ENCODE measurements at regions of chr6 and their contacts with region 1.

Region 1: DNA sequence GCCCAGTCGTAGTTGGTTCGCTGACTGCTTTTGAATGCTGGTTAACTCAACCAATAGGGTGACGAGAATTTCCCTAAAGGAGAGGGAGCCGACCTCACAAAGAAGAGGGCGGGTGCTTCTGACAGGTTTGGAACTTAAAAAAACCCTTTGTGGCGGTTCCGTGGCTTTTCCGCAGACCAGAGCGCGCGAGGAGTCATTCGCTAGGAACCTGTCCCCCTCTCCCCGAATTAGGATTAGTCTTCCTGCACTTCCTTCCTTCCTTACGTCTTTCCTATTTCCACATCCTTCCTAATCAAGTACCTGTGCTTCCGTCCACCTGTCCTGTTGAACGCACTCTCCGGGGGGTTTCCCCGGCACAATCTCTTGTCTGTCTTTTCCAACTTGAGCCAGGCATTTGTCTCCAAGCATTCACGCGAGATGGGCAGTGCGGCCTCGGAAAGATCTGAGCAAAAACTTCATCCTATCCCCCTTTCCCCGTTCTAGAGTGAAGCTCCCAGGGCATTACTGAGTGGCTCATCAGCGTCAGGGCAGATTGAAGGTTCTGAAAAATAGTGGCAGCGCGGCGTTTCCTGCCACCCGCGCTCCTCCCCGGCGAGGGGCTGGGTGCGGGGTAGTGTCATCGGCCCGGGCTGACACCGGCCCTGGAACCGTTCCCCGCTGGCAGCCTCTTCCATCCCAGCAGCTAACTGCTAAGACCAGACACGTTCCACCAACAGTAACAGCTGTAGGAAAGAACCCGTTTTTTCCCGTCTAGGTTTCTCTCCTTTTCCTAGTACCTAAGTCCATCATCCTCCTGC is 1.5 kb upstream of the STXBP5 start:
- DNase-seq: peak; percentile 98
- ATAC-seq: peak; percentile 76
- H3K4me3 ChIP-seq: peak overlapping the region; percentile 60
- H3K27ac ChIP-seq: peak overlapping the region; percentile 68
- H3K4me1 ChIP-seq: no peaks in the 10 kb centered on the region
- H3K27me3 ChIP-seq: no peaks in the 10 kb centered on the region
- CTCF ChIP-seq: no peak
- POLR2A ChIP-seq: no peak; the same call in 1 of the 2 replicates
- RAD21 ChIP-seq: no peak

Region 2: GRCh38 chr6:146028293-146028691 is 1174.4 kb before region 1 on chr6:
- CTCF ChIA-PET with region 1: no interaction called
- POLR2A ChIA-PET with region 1: no interaction called
- dilution Hi-C with region 1: no loop called
- in situ Hi-C with region 1: no loop called
- intact Hi-C with region 1: no loop called
- DNase-seq: peak; percentile 42
- ATAC-seq: peak; percentile 99
- H3K4me3 ChIP-seq: no peak overlapping the region
- H3K27ac ChIP-seq: no peak overlapping the region
- H3K4me1 ChIP-seq: no peaks in the 10 kb centered on the region
- H3K27me3 ChIP-seq: no peaks in the 10 kb centered on the region; the same call in 1 of the 2 replicates
- CTCF ChIP-seq: no peak
- POLR2A ChIP-seq: no peak
- RAD21 ChIP-seq: no peak

Region 3: GRCh38 chr6:146682919-146683318 is 519.8 kb before region 1 on chr6:
- CTCF ChIA-PET with region 1: no interaction called
- POLR2A ChIA-PET with region 1: no interaction called
- dilution Hi-C with region 1: no loop called
- in situ Hi-C with region 1: no loop called
- intact Hi-C with region 1: no loop called
- DNase-seq: no peak
- ATAC-seq: no peak
- H3K4me3 ChIP-seq: no peak overlapping the region
- H3K27ac ChIP-seq: no peak overlapping the region
- H3K4me1 ChIP-seq: no peaks in the 10 kb centered on the region
- H3K27me3 ChIP-seq: no peaks in the 10 kb centered on the region
- CTCF ChIP-seq: no peak
- POLR2A ChIP-seq: no peak
- RAD21 ChIP-seq: no peak

Region 4: DNA sequence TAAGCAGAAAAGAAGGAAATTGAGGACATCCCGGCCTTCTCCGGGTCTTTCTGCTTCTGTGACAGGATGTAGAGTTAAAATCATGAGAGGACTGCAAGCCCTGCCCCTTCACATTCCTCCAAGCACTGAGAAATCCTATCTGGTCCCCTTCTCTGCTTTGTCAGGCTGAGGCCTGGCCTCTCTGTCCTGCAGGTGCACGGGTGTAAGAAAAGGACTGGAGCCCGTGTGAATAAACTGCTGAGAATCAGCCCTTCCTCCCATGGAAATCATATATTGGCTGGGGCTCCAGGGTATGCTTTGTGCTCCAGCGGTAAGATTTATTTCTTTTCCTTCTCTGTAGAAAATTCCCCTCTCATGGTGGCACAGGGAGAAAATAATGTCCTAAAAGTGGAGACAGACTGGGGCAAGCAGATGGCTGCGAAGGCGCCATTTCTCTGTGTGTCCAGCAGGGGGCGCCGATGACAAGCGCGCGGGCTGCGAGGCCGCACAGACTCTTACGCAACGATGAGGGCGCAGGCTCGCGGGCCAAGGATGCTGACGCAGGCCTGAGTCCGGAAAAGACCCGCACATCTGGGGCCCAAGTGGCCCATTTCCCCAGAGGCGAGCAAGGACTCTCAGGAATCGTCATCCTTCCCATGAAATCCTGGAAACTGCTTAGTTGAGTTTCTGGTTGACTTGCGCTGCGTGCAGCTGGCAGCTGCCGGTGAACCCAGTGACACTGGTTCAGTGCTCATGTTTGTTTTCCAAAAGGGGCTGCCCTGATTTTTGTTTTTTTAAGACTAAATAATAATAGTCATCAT is 345.3 kb before region 1 on chr6:
- CTCF ChIA-PET with region 1: no interaction called
- POLR2A ChIA-PET with region 1: interaction called, 3 read pairs
- dilution Hi-C with region 1: no loop called
- in situ Hi-C with region 1: no loop called
- intact Hi-C with region 1: loop called (anchors 1 kb)
- DNase-seq: peak; percentile 93
- ATAC-seq: peak; percentile 96
- H3K4me3 ChIP-seq: peak overlapping the region; percentile 27; the same call in 1 of the 2 replicates
- H3K27ac ChIP-seq: peak overlapping the region; percentile 79
- H3K4me1 ChIP-seq: peaks cover 3% of the 10 kb centered on the region; the same call in 1 of the 2 replicates
- H3K27me3 ChIP-seq: no peaks in the 10 kb centered on the region
- CTCF ChIP-seq: peak; percentile 97
- POLR2A ChIP-seq: peak; percentile 33; the same call in 1 of the 2 replicates
- RAD21 ChIP-seq: peak; percentile 99

Region 5: DNA sequence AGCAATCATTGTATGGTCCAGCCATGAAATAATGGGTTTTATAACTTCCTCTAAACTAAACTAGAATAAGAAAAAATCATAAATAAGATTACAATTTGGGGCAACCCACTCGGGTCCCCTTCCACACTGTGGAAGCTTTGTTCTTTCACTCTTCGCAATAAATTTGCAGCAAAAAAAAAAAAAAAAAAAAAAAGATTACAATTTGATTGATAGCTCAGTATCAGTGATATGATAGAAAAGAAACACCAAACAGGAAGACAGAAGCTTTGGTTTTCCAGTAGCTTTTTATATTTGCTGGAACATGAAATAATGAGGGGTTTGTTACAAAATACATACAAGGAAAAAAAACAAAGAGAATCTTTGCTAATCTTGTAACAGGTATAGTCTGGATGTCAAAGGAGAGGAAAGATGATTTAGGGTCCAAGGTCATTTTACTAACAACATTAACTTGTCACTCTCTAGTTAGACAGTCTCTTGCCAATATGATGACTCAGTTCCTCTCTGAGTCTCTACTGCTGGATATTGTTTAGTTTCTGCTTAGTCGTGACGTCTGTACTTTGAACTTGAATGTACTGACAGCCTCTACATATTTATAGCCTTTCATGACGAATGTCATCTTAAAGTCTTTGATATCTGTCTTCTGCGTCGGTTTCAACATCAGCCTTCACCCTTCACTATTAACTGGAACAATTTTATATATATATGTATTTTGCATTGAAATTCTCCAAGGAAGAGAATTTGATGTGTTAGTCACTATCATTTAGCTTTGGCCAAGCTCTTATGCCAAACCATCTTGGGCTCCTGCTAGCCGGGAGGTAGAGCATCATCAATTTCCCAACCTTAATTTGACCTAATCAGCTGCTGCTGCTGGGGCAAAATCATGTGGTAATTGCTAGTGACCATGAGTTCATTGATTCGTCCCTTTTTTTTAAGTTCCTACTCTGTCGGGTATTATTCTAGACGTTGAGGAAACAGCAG is 211.6 kb before region 1 on chr6:
- CTCF ChIA-PET with region 1: no interaction called
- POLR2A ChIA-PET with region 1: no interaction called
- dilution Hi-C with region 1: no loop called
- in situ Hi-C with region 1: no loop called
- intact Hi-C with region 1: loop called (anchors 10 kb)
- DNase-seq: peak; percentile 82
- ATAC-seq: peak; percentile 70
- H3K4me3 ChIP-seq: no peak overlapping the region
- H3K27ac ChIP-seq: no peak overlapping the region
- H3K4me1 ChIP-seq: peaks cover 4% of the 10 kb centered on the region; the same call in 1 of the 2 replicates
- H3K27me3 ChIP-seq: no peaks in the 10 kb centered on the region
- CTCF ChIP-seq: no peak
- POLR2A ChIP-seq: no peak
- RAD21 ChIP-seq: no peak

Region 6: DNA sequence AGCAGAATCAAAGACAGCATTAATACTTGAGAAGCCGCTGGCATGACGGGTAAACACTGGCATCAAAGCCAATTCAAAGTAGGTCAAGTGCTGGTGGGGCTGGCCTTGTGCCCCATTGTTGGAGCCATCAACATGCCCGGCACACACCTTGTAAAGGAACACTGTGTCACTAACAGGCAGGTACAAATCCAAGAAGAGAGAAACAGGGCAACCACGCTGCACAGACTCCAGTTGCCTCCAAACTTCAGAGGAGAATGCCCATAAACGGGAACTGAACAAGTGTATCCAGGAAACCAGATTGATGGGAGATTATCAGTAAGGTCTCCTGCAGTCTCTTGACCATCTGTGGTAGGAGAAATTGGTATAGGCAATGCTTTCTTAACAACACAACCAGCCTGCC is 125.5 kb before region 1 on chr6:
- CTCF ChIA-PET with region 1: no interaction called
- POLR2A ChIA-PET with region 1: interaction called, 12 read pairs
- dilution Hi-C with region 1: no loop called
- in situ Hi-C with region 1: no loop called
- intact Hi-C with region 1: no loop called
- DNase-seq: no peak
- ATAC-seq: no peak
- H3K4me3 ChIP-seq: no peak overlapping the region
- H3K27ac ChIP-seq: no peak overlapping the region
- H3K4me1 ChIP-seq: no peaks in the 10 kb centered on the region
- H3K27me3 ChIP-seq: no peaks in the 10 kb centered on the region
- CTCF ChIP-seq: no peak
- POLR2A ChIP-seq: no peak
- RAD21 ChIP-seq: no peak

Region 7: DNA sequence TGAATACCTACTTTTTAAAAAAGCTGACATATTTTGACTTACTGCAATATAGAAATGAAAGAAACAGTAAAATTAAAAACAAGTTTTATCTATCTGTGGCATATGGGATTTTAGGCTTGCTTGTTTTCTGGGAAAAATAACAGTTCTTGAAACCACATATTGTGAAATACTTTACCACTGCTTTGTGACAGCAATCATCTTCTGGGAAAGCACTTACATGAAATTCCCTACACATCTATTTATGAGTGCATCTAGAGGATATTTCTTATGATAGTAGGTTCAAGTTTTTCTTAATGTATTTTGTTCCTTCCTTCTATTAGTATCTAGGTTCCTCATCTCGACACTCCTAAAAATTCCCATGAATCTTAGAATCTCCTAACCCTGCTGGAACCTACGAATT is 76.7 kb after region 1 on chr6:
- CTCF ChIA-PET with region 1: no interaction called
- POLR2A ChIA-PET with region 1: no interaction called
- dilution Hi-C with region 1: no loop called
- in situ Hi-C with region 1: no loop called
- intact Hi-C with region 1: no loop called
- DNase-seq: peak; percentile 50
- ATAC-seq: no peak
- H3K4me3 ChIP-seq: no peak overlapping the region
- H3K27ac ChIP-seq: no peak overlapping the region
- H3K4me1 ChIP-seq: peaks cover 1% of the 10 kb centered on the region
- H3K27me3 ChIP-seq: no peaks in the 10 kb centered on the region
- CTCF ChIP-seq: no peak
- POLR2A ChIP-seq: no peak
- RAD21 ChIP-seq: no peak

Region 8: GRCh38 chr6:147447835-147448611 is 245.3 kb after region 1 on chr6:
- CTCF ChIA-PET with region 1: no interaction called
- POLR2A ChIA-PET with region 1: interaction called, 16 read pairs
- dilution Hi-C with region 1: no loop called
- in situ Hi-C with region 1: no loop called
- intact Hi-C with region 1: no loop called
- DNase-seq: no peak
- ATAC-seq: no peak
- H3K4me3 ChIP-seq: no peak overlapping the region
- H3K27ac ChIP-seq: no peak overlapping the region
- H3K4me1 ChIP-seq: no peaks in the 10 kb centered on the region
- H3K27me3 ChIP-seq: 0 out of 2 replicates have a peak, but pooled peaks cover 2% of the 10 kb centered on the region
- CTCF ChIP-seq: no peak
- POLR2A ChIP-seq: no peak
- RAD21 ChIP-seq: no peak

Measured in IMR-90 (cell line).